Tibial artery (tissue), 4 donors: ENCODE measurements at regions of chr12 and their contacts with region 1.

Region 1: DNA sequence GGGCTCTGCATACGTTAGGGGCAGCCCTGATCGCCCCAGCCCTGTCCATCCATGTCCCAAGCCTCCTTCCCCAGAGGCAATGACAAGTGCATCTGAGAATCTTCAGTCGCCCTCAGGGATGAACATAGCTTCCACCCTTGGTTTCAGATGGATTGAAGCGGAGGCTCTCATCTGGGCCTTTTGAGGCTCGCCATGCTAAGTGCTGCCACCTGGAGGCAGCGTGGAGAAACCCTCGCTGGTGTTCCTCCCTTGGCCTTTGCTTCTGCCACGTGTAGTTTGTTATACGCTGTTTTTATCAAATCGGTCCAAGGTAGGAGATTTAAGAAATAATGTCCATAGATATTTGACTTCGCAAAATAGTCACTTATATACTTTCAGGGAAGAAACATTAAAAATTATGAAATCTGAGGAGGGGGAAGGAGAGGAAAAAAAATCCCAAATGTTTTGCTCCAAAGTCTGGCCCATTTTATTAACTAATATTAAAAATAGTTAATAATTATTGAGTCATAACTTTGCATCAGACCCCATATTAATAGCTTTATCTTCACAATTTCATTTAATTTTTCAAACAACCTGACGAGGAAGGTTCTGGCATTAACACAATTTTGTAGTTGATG is 28.8 kb upstream of the LRRC10 start:
- DNase-seq: peak; percentile 42 to 71
- H3K4me3 ChIP-seq: no peak overlapping the region
- H3K27ac ChIP-seq: no peak overlapping the region
- H3K4me1 ChIP-seq: no peaks in the 10 kb centered on the region
- H3K27me3 ChIP-seq: no peaks in the 10 kb centered on the region
- CTCF ChIP-seq: peak; percentile 62 to 73

Region 2: GRCh38 chr12:69359531-69360347 is 279.8 kb before region 1 on chr12 and contains the start of gene YEATS4:
- intact Hi-C with region 1: loop called (anchors 10 kb)
- DNase-seq: peak; percentile 82 to 93
- H3K4me3 ChIP-seq: peak within 1 kb of the TSS; percentile 78 to 96
- H3K27ac ChIP-seq: peak within 1 kb of the TSS; percentile 95 to 99
- H3K4me1 ChIP-seq: peaks cover 0 to 20% (median 4%) of the 10 kb centered on the region in 4 donors
- H3K27me3 ChIP-seq: no peaks in the 10 kb centered on the region
- CTCF ChIP-seq: peak in 1 of 2 experiments; percentile 24